Activated B cell treated with CpG ODN at 0.5 μM for 24 hours (primary cell): ENCODE measurements at regions of chr1 and their contacts with region 1.

Region 1: GRCh38 chr1:153946622-153947241 is at the start of gene DENND4B:
- DNase-seq: peak; percentile 74
- ATAC-seq: peak; percentile 54
- H3K4me3 Mint-ChIP-seq: peak within 1 kb of the TSS; percentile 90
- H3K27ac Mint-ChIP-seq: peak within 1 kb of the TSS; percentile 96
- H3K4me1 Mint-ChIP-seq: peaks cover 71% of the 10 kb centered on the region
- H3K27me3 Mint-ChIP-seq: no peaks in the 10 kb centered on the region
- CTCF ChIP-seq: no peak
- total RNA-seq, gene DENND4B: 217 and 257 TPM in 2 replicates

Region 2: DNA sequence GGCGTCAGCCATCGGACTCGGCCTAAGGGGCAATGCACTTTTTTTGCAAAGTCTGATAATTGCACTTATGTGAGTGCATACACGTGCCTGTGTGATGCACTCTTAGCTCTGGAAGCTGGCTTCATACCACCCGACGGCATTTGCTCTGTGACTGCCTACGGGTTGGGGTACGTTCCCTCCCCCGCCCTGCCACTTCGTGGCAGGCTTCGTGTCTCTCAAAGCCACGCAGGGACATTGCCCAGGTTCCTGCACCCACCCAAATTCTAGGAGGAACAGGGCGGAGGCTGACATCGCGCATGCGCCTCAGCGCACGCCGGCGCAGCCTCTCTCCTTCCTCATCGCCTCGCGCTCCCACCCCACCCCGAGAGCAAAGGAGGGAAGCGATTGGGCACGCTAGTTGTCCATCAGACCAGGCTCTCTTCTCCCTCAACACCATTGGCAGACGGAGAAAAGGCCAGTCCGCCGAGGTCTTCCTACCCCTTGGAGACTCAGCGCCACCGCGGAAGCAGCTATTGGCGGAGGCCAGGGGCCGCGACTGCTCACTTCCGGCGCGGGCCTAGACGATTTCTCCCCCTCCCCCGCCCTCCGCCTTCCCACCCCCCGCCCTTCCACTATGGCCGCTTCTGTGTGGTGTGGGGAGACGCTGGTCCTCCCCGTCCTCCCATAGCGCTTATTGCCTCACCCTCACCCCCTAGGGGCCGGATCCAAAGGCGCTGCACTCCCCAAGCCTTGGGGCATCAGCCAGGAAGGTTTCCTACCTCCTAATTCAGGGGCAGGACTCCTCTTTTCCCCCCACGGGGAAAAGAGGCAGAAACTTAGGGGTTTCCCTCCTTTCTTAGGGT is 219.0 kb before region 1 on chr1 and contains the start of gene INTS3:
- CTCF ChIA-PET with region 1: no interaction called
- POLR2A ChIA-PET with region 1: interaction called, 10 read pairs
- intact Hi-C with region 1: no loop called
- DNase-seq: peak; percentile 90
- ATAC-seq: peak; percentile 96
- H3K4me3 Mint-ChIP-seq: peak within 1 kb of the TSS; percentile 97
- H3K27ac Mint-ChIP-seq: peak within 1 kb of the TSS; percentile 96
- H3K4me1 Mint-ChIP-seq: peaks cover 39% of the 10 kb centered on the region
- H3K27me3 Mint-ChIP-seq: no peaks in the 10 kb centered on the region
- CTCF ChIP-seq: no peak
- total RNA-seq, gene INTS3: 81.1 and 88.6 TPM in 2 replicates

Region 3: GRCh38 chr1:153796791-153797659 is 149.7 kb before region 1 on chr1:
- CTCF ChIA-PET with region 1: interaction called, 6 read pairs
- POLR2A ChIA-PET with region 1: interaction called, 21 read pairs
- intact Hi-C with region 1: loop called (anchors 1 kb)
- DNase-seq: peak; percentile 59
- ATAC-seq: peak; percentile 97
- H3K4me3 Mint-ChIP-seq: no peak overlapping the region
- H3K27ac Mint-ChIP-seq: peak overlapping the region; percentile 1
- H3K4me1 Mint-ChIP-seq: peaks cover 16% of the 10 kb centered on the region
- H3K27me3 Mint-ChIP-seq: no peaks in the 10 kb centered on the region
- CTCF ChIP-seq: peak; percentile 89

Region 4: DNA sequence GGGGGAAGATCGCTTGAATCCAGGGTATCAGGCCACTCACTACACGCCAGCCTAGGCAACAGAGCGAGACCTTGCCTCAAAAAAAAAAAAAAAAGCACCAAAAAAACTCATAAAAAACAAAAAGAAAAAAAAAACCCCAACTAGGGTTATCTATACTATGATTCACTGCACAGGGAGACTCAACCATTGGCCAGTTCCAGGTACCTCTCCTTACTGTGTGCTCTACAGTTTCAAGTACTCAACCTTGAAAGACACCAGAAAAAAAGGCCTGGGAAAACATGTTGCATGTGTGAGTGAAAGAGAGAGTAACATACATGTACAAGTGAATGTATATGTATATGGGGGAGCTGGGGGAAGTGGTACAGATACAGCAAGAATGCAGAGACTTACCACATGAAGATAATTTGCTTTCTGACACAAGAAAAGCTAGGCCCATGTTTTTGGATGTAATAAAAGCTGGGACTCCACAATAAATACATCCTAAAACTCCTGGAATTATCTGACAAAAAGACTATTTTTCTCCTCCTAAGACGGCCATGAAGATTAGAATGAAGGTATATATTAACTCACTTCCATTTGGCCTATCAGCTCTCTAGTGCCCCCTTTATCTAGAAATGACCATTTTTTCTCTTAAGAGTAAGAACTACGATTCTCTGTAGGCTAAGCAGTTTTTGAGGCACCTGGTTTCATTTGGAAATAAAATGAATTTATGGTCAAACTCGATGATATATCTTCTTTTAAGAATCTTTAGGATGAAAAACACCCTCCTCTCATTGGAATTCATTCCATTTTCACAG is 119.4 kb before region 1 on chr1:
- CTCF ChIA-PET with region 1: interaction called, 20 read pairs
- POLR2A ChIA-PET with region 1: interaction called, 11 read pairs
- intact Hi-C with region 1: no loop called
- DNase-seq: no peak
- ATAC-seq: no peak
- H3K4me3 Mint-ChIP-seq: no peak overlapping the region
- H3K27ac Mint-ChIP-seq: no peak overlapping the region
- H3K4me1 Mint-ChIP-seq: peaks cover 11% of the 10 kb centered on the region
- H3K27me3 Mint-ChIP-seq: no peaks in the 10 kb centered on the region
- CTCF ChIP-seq: no peak

Region 5: DNA sequence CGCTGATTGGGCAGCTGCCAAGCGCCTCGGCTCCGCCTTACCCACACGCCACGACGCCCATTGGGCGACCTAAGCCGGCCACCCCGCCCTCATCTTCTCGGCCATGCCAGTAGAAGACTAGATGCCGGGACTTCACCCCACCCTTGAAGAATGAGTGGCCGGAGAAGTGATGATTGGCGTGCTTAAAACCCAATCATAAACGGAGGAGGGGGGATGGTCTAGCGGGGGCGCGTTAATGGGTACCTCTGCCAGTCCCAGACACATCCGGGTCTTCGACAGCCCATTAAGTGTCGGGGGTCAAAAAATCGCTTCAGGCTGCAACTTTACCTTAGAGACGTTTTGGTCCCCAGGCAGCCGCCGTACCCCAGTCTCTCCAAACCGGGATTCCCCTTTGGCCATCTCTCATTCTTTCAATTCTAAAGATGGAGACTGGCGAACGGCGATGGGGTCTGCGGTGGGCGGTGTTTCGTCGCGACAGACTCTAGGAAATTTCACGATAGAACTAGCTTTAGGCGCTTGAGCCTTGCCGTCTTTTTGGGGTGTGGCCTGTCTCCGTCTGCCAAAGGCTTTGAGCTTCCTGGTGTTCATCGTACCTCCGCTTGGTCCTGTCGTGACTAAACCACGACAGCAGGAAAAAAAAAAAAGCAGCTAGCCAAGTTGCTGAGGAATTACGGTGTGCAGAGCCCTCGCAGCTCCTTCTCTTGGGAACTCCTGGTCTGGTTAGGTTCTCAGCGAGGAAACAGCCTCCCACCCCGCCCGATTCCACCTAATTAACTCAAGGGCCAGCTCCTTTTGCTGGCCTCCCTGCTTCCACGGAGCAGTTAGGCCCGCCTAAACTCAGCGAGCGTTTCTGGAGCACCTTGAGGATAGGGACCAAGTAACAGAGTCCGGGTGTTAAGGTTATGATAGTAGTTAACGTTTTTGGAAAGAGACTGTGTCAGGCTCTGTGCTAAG is 23.5 kb before region 1 on chr1 and contains the start of gene GATAD2B:
- CTCF ChIA-PET with region 1: interaction called, 8 read pairs
- POLR2A ChIA-PET with region 1: interaction called, 186 read pairs
- intact Hi-C with region 1: loop called (anchors 1 kb)
- DNase-seq: peak; percentile 90
- ATAC-seq: peak; percentile 92
- H3K4me3 Mint-ChIP-seq: peak within 1 kb of the TSS; percentile 95
- H3K27ac Mint-ChIP-seq: peak within 1 kb of the TSS; percentile 95
- H3K4me1 Mint-ChIP-seq: peaks cover 47% of the 10 kb centered on the region
- H3K27me3 Mint-ChIP-seq: no peaks in the 10 kb centered on the region
- CTCF ChIP-seq: no peak
- total RNA-seq, gene GATAD2B: 78.4 and 86.3 TPM in 2 replicates

Region 6: DNA sequence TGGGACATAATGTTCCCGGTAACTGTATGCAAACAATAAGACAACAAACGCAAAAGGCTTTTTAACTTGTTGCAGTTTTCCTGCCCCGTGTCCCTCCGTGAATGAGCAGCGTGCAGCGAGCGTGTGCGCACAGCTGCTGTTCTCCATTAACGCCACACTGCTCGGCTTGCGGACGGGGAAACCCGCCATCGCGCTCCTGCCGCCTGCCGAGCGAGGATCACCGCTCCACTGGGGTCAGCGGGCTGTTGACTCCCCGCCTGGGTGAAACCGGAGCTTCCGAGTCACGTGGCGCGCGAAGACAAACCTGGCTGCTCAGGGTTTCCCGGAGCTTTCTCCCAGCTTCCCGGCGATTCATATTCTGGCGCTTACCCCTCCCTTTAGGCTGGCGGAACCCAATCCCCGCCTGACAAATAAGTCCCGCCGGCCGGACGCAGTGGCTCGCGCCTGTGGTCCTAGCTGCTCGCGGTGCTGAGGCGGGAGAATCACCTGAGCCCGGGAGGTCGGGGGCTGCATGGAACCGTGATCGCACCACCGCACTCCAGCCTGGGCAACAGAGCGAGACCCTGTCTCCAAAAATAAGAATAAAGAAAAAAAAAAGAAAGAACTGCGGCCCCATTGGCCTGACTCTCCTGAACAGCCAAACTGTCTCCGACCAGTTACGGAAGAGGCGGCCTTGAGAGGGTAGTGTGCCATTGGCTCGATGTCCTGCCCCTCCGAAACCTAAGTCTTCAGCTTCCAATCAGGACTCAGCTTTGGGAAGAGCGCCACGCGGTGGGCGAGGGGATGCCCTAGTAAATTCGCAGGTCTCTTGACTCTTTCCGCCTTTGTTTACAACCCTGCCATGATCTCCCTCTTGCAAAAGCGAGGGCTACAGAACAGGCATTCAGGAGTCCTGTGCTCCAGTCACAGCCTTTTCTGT is 20.6 kb after region 1 on chr1 and contains the start of gene CREB3L4:
- CTCF ChIA-PET with region 1: interaction called, 26 read pairs
- POLR2A ChIA-PET with region 1: interaction called, 181 read pairs
- intact Hi-C with region 1: loop called (anchors 1 kb)
- DNase-seq: peak; percentile 72
- ATAC-seq: peak; percentile 85
- H3K4me3 Mint-ChIP-seq: peak within 1 kb of the TSS; percentile 96
- H3K27ac Mint-ChIP-seq: peak within 1 kb of the TSS; percentile 97
- H3K4me1 Mint-ChIP-seq: peaks cover 62% of the 10 kb centered on the region
- H3K27me3 Mint-ChIP-seq: no peaks in the 10 kb centered on the region
- CTCF ChIP-seq: no peak
- total RNA-seq, gene CREB3L4: 9.4 and 10.2 TPM in 2 replicates

Region 7: GRCh38 chr1:154145986-154146385 is 199.3 kb after region 1 on chr1:
- CTCF ChIA-PET with region 1: no interaction called
- POLR2A ChIA-PET with region 1: no interaction called
- intact Hi-C with region 1: no loop called
- DNase-seq: no peak
- ATAC-seq: no peak
- H3K4me3 Mint-ChIP-seq: no peak overlapping the region
- H3K27ac Mint-ChIP-seq: no peak overlapping the region
- H3K4me1 Mint-ChIP-seq: peaks cover 3% of the 10 kb centered on the region
- H3K27me3 Mint-ChIP-seq: no peaks in the 10 kb centered on the region
- CTCF ChIP-seq: no peak

Region 8: GRCh38 chr1:154272217-154272998 is 325.7 kb after region 1 on chr1 and contains the start of gene HAX1:
- CTCF ChIA-PET with region 1: no interaction called
- POLR2A ChIA-PET with region 1: interaction called, 6 read pairs
- intact Hi-C with region 1: loop called (anchors 1 kb)
- DNase-seq: peak; percentile 88
- ATAC-seq: peak; percentile 93
- H3K4me3 Mint-ChIP-seq: peak within 1 kb of the TSS; percentile 96
- H3K27ac Mint-ChIP-seq: peak within 1 kb of the TSS; percentile 97
- H3K4me1 Mint-ChIP-seq: peaks cover 39% of the 10 kb centered on the region
- H3K27me3 Mint-ChIP-seq: no peaks in the 10 kb centered on the region
- CTCF ChIP-seq: peak; percentile 46
- total RNA-seq, gene HAX1: 89.4 and 93.0 TPM in 2 replicates